MCF 10A (cell line): ENCODE measurements at regions of chr5 and their contacts with region 1.

Region 1: GRCh38 chr5:77650686-77651085 is 12.2 kb upstream of the OTP start:
- DNase-seq: no peak
- H3K4me3 Mint-ChIP-seq: no peak overlapping the region
- H3K27ac Mint-ChIP-seq: no peak overlapping the region
- H3K4me1 Mint-ChIP-seq: no peaks in the 10 kb centered on the region
- H3K27me3 Mint-ChIP-seq: peaks cover 30% of the 10 kb centered on the region
- CTCF ChIP-seq: no peak

Region 2: DNA sequence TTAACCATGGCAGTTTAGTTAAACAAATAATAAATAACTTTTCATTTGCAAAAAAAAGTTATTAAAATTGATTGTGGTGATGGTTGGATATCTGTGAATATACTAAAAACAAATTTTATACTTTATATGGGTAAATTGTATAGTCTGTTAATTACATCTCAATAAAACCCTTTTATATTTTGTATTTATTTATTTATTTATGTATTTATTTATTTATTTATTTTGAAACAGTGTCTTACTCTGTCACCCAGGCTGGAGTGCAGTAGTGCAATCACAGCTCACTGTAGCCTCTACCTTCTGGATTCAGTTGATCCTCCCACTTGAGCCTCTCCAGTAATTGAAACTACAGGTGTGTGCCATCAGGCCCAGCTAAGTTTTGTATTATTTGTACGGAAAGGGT is 64.6 kb before region 1 on chr5:
- CTCF ChIA-PET with region 1: no interaction called
- POLR2A ChIA-PET with region 1: interaction called, 3 read pairs
- intact Hi-C with region 1: loop called (anchors 10 kb)
- DNase-seq: no peak
- H3K4me3 Mint-ChIP-seq: no peak overlapping the region
- H3K27ac Mint-ChIP-seq: no peak overlapping the region
- H3K4me1 Mint-ChIP-seq: no peaks in the 10 kb centered on the region
- H3K27me3 Mint-ChIP-seq: peaks cover 32% of the 10 kb centered on the region
- CTCF ChIP-seq: no peak